ENCODE measurements at regions of chr12 and their contacts with region 1.

Region 1: GRCh38 chr12:1282670-1283335 is 291.8 kb downstream of the ERC1 start:
- DNase-seq: no peak
- ATAC-seq: no peak
- H3K4me3 ChIP-seq: no peak overlapping the region
- H3K27ac ChIP-seq: no peak overlapping the region
- H3K4me1 ChIP-seq: peaks cover 0 to 9% of the 10 kb centered on the region in 2 experiments; a peak in 3 of 5 replicates
- H3K27me3 ChIP-seq: no peaks in the 10 kb centered on the region
- CTCF ChIP-seq: no peak
- EP300 ChIP-seq: no peak
- POLR2A ChIP-seq: no peak
- RAD21 ChIP-seq: no peak

Region 2: DNA sequence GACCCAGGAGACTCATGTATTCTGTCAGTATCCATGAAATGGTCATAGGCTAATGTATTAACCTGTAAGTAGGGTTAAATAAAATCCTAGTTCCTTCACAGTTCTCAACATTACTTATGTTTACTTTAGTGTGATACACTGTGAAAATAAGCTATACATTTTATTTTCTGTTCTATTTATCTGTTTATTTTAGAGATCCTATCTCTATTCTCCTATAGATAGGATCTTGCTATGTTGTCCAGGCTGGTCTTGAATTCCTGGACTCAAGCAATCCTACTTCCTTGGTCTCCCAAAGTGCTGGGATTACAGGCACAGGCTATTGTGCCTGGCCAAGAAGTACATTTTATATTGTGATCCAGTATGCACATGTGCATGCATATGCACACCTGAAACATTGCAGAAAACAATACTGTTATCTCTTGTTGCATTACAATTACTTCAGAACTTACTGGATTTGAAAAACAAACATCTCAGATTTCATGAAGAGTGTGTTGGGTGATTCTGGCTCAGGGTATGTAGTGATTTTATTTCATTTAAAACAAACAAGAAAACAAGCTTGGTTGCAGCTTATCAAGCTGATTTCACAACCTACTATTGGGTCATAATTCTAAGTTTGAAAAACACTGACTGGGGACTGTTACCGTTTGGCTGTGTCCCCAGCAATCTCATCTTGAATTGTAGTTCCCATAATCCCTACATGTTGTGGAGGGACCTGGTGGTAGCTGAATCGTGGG is 260.8 kb before region 1 on chr12:
- CTCF ChIA-PET with region 1: no interaction called
- POLR2A ChIA-PET with region 1: no interaction called
- in situ Hi-C with region 1: no loop called
- intact Hi-C with region 1: no loop called
- DNase-seq: no peak
- ATAC-seq: no peak
- H3K4me3 ChIP-seq: no peak overlapping the region
- H3K27ac ChIP-seq: no peak overlapping the region
- H3K4me1 ChIP-seq: no peaks in the 10 kb centered on the region
- H3K27me3 ChIP-seq: no peaks in the 10 kb centered on the region
- CTCF ChIP-seq: no peak
- EP300 ChIP-seq: no peak
- POLR2A ChIP-seq: no peak
- RAD21 ChIP-seq: no peak

Region 3: DNA sequence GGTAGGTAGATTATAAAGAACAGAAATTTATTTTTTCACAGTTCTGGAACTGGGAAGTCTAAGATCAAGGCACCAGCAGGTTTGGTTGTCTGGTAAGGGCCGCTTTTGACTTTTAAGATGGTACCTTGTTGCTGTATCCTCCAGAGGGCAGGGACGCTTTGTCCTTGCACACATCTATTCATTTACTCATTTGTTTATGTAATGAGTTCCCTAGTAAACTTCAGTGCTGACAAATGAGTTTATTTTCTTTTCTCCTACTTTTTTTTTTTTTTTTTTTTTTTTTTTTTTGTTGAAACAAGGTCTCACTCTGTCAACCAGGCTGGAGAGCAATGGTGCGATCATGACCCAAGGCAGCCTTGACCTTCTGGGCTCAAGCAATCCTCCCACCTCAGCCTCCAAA is 115.9 kb after region 1 on chr12:
- CTCF ChIA-PET with region 1: no interaction called
- POLR2A ChIA-PET with region 1: no interaction called
- in situ Hi-C with region 1: loop called (anchors 10 kb)
- intact Hi-C with region 1: no loop called
- DNase-seq: peak in 1 of 4 experiments; percentile 14
- ATAC-seq: no peak
- H3K4me3 ChIP-seq: no peak overlapping the region
- H3K27ac ChIP-seq: no peak overlapping the region
- H3K4me1 ChIP-seq: no peaks in the 10 kb centered on the region; a peak in 2 of 5 replicates
- H3K27me3 ChIP-seq: no peaks in the 10 kb centered on the region
- CTCF ChIP-seq: peak in 1 of 3 experiments; percentile 29; a peak in 1 of 6 replicates
- EP300 ChIP-seq: no peak
- POLR2A ChIP-seq: no peak
- RAD21 ChIP-seq: peak in 1 of 2 experiments; percentile 49; a peak in 2 of 4 replicates

Region 4: GRCh38 chr12:1594261-1595025 is 311.6 kb after region 1 on chr12 and contains the start of gene FBXL14:
- CTCF ChIA-PET with region 1: no interaction called
- POLR2A ChIA-PET with region 1: no interaction called
- in situ Hi-C with region 1: loop called (anchors 25 kb)
- intact Hi-C with region 1: no loop called
- DNase-seq: peak; percentile 77 to 91 (median 80)
- ATAC-seq: peak; percentile 80
- H3K4me3 ChIP-seq: peak within 1 kb of the TSS; percentile 62
- H3K27ac ChIP-seq: peak within 1 kb of the TSS; percentile 87
- H3K4me1 ChIP-seq: peaks cover 26 to 42% of the 10 kb centered on the region in 2 experiments; a peak in 4 of 5 replicates
- H3K27me3 ChIP-seq: no peaks in the 10 kb centered on the region
- CTCF ChIP-seq: no peak
- EP300 ChIP-seq: no peak
- POLR2A ChIP-seq: no peak
- RAD21 ChIP-seq: no peak
- polyA plus RNA-seq, gene FBXL14: 0.13 to 0.17 TPM

Measured in K562 (cell line).